Motor neuron (in vitro differentiated cells): ENCODE measurements at regions of chr7 and their contacts with region 1.

Region 1: DNA sequence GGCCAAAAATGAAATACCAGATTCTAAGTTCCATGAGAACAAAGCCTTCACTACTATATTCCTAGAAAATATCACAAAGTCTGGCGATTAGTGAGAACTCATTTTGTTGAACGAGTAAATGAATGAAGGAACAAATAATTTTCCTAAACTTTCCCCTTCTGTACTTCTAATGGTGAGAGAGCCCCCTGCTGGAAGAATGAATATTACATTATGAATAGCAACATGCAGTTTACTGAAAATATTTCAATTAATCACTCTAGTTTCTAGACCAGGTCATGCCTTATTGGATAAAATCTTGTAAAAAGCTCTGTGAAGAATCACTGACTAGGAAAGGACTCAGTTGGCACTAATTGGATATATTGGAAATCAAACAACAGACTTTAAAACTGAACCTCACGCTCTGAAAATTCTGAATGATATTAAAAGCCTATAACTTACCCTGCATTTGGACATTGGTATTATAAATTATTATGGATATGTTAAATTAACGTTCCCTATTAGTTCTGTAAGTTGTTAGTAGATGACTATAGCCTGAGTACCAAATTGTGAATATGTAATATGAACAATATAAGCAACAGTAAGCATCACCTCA is 32.4 kb upstream of the MTPN start:
- ATAC-seq: peak in 2 of 8 experiments; percentile 26 to 49
- H3K4me3 ChIP-seq: no peak overlapping the region
- H3K27ac ChIP-seq: no peak overlapping the region
- H3K4me1 ChIP-seq: no peaks in the 10 kb centered on the region

Region 2: GRCh38 chr7:135281363-135281949 is 728.1 kb before region 1 on chr7:
- in situ Hi-C with region 1: loop called in 1 of 9 experiments (anchors 25 kb)
- ATAC-seq: peak; percentile 71 to 95 (median 90)
- H3K4me3 ChIP-seq: no peak overlapping the region
- H3K27ac ChIP-seq: no peak overlapping the region
- H3K4me1 ChIP-seq: no peaks in the 10 kb centered on the region

Region 3: DNA sequence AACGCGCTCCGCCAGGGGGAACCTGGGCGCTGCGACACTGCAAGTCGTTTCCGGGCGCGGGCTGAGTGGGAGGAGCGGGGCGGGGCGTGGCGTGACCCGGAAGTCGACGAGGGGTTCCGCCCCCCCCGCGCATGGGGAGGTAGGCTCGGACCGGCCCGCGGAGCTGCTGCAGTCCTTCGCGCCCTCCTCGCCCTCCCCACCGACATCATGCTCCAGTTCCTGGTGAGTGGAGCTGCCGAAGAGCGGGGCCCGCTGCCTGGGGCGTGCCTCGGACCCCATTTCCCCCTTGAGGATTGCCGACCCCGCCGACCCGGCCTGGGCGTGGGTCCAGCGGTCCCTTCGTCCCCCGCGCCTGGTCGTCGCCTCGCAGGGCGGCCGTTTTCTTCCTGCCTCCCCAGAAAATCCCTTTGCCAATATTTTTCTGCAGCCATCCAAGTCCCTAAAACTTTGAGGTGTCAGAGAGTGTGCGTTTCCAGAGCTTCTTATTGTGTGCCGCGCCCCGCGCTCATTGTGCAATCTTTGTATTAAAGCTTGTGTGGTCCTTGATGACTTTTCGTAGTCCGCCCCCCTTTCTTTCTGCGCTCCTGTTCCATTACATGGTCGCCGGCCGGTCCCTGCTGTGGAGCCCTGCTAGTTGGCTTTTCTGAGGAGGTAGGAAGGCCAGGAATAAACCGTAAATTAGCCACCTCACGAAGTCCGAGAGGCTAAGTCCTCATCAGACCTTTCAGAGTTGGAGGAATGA is 347.0 kb before region 1 on chr7 and contains the start of gene STMP1:
- in situ Hi-C with region 1: loop called in 1 of 9 experiments (anchors 25 kb)
- ATAC-seq: peak; percentile 89 to 98 (median 96)
- H3K4me3 ChIP-seq: peak within 1 kb of the TSS; percentile 84 to 97 (median 88)
- H3K27ac ChIP-seq: peak within 1 kb of the TSS; percentile 60 to 83
- H3K4me1 ChIP-seq: peaks cover 11 to 12% of the 10 kb centered on the region in 2 donors
- total RNA-seq, gene STMP1: 17.0 to 39.7 (median 29.1) TPM

Region 4: DNA sequence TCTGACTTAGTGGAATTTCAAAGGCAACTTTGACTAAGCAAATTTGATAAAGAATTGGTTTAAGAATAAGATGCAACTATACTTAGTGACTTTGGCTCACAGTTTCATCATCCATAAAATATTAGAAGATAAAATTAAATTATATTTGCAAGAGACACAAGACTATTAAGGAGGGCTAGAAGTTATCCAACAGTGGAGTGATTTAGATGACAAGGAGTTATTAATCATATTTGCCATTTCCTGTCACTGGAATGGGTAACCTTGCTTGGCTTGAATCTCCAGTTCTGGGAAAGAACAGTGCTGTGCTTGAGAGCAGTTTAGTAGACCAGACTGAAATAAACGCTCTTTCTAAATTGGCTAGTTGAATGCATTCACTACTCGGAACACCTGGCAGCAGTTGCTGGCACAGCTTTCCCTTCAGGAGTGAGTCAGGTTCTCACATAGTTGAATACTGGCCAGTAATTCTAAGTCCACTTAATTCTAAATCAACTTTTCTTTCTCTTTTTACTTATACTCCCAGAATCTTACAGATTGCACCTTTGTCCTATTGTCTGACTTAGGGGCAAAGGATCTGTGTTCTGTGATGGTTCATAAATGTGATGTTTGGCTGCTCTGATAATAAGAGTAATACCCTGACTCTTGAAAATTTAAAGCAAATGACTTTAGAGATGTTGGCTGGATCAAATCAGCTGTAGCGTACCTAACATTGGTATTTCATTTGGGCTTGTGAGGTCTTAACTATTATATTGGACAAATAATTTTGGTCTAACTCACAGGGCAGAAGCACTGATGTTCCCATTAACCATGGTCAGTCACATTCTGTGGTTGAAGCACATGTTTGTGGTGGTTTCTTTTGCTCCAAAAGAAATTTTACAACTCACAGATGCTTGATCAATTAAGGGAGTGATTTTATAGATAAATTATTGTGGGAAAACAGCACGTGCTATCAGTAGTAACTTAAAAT is 330.7 kb before region 1 on chr7:
- in situ Hi-C with region 1: loop called in 2 of 9 experiments (anchors 25 kb)
- ATAC-seq: peak in 1 of 8 experiments; percentile 48
- H3K4me3 ChIP-seq: no peak overlapping the region
- H3K27ac ChIP-seq: no peak overlapping the region
- H3K4me1 ChIP-seq: no peaks in the 10 kb centered on the region

Region 5: DNA sequence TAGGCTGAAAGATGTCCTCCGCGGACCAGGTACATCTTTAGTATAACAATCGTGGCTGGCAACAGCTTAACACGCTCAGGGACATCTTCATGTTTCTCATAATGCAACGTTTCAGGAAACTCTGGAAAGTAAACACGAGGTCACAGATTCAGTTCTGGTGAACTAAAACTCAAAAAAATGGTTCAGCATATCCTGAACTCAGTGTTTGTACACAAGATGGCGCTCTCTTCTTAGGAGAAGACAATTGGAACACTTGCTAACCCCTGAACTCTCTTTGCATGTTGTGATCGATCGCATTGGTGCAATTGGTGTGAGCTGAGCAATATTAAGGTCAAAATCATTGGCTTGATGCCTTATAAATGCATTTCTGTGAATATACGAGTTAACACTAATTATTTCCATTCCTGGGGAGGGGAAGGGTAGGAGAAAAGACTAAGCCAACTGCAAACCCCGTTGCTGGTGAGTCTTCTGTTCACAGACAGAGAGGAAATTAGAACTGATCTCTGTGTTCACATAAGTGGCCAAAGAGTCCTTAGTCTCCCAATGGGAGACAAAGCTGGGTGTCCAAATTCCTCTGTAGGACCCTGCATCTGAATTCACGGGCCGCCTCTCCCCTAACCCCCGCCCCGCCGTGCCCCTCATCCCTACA is 208.4 kb before region 1 on chr7:
- in situ Hi-C with region 1: loop called in 6 of 9 experiments (anchors 10 to 25 kb)
- ATAC-seq: peak; percentile 47 to 84 (median 76)
- H3K4me3 ChIP-seq: no peak overlapping the region
- H3K27ac ChIP-seq: no peak overlapping the region
- H3K4me1 ChIP-seq: peaks cover 0 to 2% of the 10 kb centered on the region in 2 donors

Region 6: DNA sequence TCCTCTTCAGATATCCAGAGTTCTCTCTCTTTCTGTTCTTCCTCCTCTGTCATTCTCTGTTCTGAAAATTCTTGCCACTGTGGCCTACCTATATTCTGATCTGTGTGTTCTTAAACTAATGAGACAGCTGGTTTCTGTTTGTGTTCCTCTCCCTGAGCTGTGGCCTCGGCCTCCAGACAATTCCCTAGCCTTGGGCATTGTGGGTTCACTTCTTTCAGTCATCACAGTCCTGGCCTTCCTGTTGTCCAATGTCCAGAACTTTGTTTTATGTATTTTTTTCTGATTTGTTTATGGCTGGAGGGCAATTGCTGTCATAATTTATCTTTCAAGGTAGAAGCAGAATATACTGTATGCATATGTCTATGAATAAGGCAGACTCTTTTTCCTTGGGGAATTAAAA is 140.7 kb after region 1 on chr7:
- in situ Hi-C with region 1: no loop called
- ATAC-seq: peak in 2 of 8 experiments; percentile 21 to 43
- H3K4me3 ChIP-seq: no peak overlapping the region
- H3K27ac ChIP-seq: no peak overlapping the region
- H3K4me1 ChIP-seq: no peaks in the 10 kb centered on the region

Region 7: GRCh38 chr7:136594739-136595144 is 585.2 kb after region 1 on chr7:
- in situ Hi-C with region 1: no loop called
- ATAC-seq: peak in 2 of 8 experiments; percentile 56 to 82
- H3K4me3 ChIP-seq: no peak overlapping the region
- H3K27ac ChIP-seq: no peak overlapping the region
- H3K4me1 ChIP-seq: no peaks in the 10 kb centered on the region